ENCODE measurements at regions of chr17 and their contacts with region 1.

Region 1: GRCh38 chr17:42819944-42820535 is 4.0 kb downstream of the BECN1 start:
- DNase-seq: peak; percentile 79
- H3K4me3 Mint-ChIP-seq: no peak overlapping the region
- H3K27ac Mint-ChIP-seq: no peak overlapping the region
- H3K4me1 Mint-ChIP-seq: peaks cover 24% of the 10 kb centered on the region
- H3K27me3 Mint-ChIP-seq: no peaks in the 10 kb centered on the region

Region 2: DNA sequence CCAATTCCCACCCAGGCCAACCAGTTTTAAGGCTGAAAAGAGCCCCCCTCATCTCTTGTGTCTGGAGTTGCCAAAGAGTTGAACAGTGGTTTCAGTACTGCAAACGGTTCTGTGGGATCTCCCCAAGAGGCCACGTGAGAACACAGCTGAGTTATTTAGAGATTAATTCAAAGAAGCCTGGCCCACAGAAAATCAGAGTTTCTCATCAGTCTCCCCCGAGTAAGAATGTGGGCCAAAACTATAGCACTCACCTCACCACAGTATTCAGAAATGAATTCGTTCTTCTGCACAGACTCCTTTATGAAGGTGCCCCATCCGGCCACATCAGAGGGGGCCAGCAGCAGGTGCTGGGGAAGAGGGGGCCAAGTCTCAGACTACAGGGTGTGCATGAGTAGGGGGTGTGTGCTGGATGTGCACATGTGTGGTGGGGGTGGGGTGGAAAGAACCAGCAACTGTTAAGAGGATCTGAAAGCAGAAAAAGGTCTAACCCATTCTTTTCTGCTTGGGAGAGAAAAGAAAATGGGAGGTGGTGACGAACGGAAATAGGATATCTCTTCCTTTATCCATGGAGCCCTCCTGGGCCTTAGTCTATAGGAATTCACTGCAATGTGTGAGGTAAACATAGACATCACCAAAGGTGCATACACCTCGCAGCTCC is 115.1 kb before region 1 on chr17:
- CTCF ChIA-PET with region 1: no interaction called
- POLR2A ChIA-PET with region 1: no interaction called
- intact Hi-C with region 1: loop called (anchors 10 kb)
- DNase-seq: peak; percentile 73
- H3K4me3 Mint-ChIP-seq: no peak overlapping the region
- H3K27ac Mint-ChIP-seq: peak overlapping the region; percentile 18
- H3K4me1 Mint-ChIP-seq: peaks cover 46% of the 10 kb centered on the region
- H3K27me3 Mint-ChIP-seq: no peaks in the 10 kb centered on the region

Region 3: DNA sequence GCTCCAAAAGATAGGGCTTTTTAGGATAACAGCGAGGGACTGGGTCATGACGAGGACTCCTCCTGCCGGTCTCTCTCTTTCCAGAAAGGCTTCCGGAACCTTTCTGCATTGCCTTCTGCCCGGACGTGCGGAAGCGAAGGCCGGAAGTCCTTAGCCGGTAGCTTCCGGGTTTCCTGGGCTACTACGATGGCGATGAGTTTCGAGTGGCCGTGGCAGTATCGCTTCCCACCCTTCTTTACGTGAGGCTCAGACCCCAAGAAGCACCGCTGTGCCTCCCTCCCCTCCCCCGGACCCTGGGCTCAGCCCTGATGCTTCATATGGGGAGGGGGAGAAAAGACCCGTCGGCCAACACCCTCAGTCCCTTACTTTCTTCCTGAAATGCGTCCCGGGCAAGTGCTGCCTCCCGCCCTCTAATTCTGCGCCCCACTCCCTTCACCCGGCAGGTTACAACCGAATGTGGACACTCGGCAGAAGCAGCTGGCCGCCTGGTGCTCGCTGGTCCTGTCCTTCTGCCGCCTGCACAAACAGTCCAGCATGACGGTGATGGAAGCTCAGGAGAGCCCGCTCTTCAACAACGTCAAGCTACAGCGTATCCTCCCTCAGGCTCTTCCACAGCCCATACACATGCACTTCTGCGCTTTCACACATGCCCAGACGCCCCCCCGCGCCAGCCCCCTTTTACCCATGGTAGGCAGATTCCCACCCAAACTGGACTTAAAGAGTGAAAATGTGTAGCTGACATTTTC is 46.6 kb before region 1 on chr17 and contains the start of gene VPS25:
- CTCF ChIA-PET with region 1: interaction called, 7 read pairs
- POLR2A ChIA-PET with region 1: interaction called, 4 read pairs
- intact Hi-C with region 1: loop called (anchors 2 kb)
- DNase-seq: peak; percentile 84
- H3K4me3 Mint-ChIP-seq: peak within 1 kb of the TSS; percentile 100
- H3K27ac Mint-ChIP-seq: peak within 1 kb of the TSS; percentile 87
- H3K4me1 Mint-ChIP-seq: peaks cover 22% of the 10 kb centered on the region
- H3K27me3 Mint-ChIP-seq: no peaks in the 10 kb centered on the region
- total RNA-seq, gene VPS25: 57.5 to 58.6 TPM

Region 4: DNA sequence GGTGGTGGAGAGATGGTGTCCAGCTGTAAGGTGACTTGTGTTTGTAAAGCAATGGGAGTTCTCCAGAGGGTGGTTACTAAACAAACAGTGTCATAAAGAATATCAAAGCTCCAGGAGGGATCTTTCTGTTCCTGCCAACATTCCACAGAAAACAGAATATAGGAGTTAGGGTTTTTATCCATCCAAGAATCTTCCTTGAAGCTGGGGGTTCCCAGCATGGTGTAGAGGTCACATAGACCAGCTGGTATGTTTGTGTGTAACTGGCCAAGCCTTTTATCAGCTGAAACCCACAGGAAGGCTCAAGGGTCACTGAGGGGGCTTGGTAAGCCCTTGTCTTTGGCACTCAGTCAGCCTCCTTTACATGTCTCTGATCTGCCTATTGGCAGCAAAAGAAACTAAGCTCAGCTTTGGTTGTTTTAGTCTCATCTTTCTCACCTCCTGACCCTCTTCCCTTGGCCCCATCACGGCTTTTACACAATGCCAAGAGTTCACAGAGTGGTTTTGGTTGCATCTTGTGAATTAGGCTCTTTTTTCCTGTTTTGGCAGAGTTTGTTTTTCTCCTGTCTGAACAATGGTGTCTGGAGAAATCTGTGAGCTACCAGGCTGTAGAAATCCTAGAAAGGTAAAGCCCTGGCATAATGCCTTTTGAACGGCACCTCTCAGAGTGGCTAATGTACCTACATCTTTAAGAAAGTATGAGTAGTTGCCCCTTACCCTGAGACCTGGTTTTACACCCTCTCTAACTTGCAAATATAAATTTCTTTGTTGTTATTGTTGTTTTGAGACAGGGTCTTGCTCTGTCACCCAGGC is 16.8 kb before region 1 on chr17:
- CTCF ChIA-PET with region 1: interaction called, 14 read pairs
- POLR2A ChIA-PET with region 1: no interaction called
- intact Hi-C with region 1: no loop called
- DNase-seq: no peak
- H3K4me3 Mint-ChIP-seq: no peak overlapping the region
- H3K27ac Mint-ChIP-seq: peak overlapping the region; percentile 38
- H3K4me1 Mint-ChIP-seq: peaks cover 7% of the 10 kb centered on the region
- H3K27me3 Mint-ChIP-seq: no peaks in the 10 kb centered on the region

Region 5: DNA sequence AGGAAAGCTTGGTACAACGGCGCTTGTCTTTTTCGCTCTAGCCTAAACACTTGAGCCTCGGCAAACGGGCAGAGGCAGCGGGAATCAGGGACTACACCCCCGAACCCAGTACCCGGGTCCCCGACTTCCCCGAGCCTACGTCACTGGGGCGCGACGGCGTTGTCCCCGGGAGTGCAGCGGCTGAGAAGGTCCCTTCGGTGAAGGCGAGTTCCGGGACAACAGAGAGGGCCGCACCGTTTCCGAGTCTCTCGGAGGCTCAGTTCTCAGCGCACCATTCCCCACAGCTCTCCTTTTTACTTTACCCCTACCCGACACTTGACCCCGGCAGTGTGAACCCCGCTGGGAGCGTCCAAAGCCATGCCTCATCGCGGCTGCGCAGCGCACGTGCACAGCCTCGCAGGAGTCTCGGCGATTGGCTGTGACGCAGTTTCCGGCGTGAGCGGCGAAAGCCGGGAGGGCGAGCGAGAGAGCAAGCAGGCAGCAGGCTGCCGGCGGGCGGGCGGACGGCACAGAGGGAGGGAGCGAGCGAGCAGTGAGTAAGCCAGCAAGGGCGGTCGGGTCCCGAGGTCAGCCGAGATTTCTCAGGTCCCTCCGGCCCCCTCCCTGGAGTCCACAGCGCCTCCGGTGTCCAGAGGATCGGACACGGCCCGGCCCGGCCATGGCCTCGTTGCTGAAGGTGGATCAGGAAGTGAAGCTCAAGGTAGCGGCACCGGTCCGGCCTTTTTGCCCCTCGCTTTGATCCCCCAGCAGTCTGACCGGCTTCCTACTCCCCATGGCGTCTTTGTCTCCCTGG is 13.1 kb after region 1 on chr17 and contains the start of gene PSME3:
- CTCF ChIA-PET with region 1: interaction called, 47 read pairs
- POLR2A ChIA-PET with region 1: interaction called, 14 read pairs
- intact Hi-C with region 1: loop called (anchors 1 kb)
- DNase-seq: peak; percentile 93
- H3K4me3 Mint-ChIP-seq: peak within 1 kb of the TSS; percentile 97
- H3K27ac Mint-ChIP-seq: peak within 1 kb of the TSS; percentile 98
- H3K4me1 Mint-ChIP-seq: peaks cover 30% of the 10 kb centered on the region
- H3K27me3 Mint-ChIP-seq: no peaks in the 10 kb centered on the region
- total RNA-seq, gene PSME3: 111 to 116 TPM

Region 6: DNA sequence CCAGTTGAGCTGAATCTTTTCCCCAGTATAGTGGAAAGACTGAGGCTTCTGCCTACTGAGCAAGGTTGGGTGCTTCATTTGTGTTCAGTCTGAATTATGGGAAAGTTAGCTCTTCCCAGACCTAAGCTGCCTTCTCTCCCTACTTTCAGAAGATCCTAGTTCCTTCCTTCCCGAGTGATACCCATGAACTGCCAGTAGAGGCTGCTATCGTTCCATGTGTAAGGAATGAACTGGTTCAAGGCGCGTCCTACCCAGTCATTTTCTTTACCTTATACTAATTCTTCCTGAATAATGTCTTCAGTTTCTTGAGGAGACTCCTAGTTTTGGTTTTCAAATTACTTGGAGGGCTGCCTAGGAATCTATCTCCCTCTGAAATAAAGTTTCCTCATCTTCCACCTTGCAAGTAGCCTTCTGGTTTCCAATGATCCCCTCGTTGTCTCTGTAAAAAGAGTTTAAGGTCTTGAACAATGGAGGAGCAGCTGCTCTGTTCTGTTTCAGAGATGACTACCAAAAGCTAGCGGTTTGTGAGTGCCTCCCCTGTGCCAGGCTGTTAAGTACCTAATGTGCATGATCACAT is 23.4 kb after region 1 on chr17:
- CTCF ChIA-PET with region 1: interaction called, 11 read pairs
- POLR2A ChIA-PET with region 1: interaction called, 7 read pairs
- intact Hi-C with region 1: no loop called
- DNase-seq: peak; percentile 17
- H3K4me3 Mint-ChIP-seq: no peak overlapping the region
- H3K27ac Mint-ChIP-seq: no peak overlapping the region
- H3K4me1 Mint-ChIP-seq: peaks cover 16% of the 10 kb centered on the region
- H3K27me3 Mint-ChIP-seq: no peaks in the 10 kb centered on the region

Region 7: GRCh38 chr17:42928714-42929496 is 108.9 kb after region 1 on chr17:
- CTCF ChIA-PET with region 1: interaction called, 20 read pairs
- POLR2A ChIA-PET with region 1: interaction called, 3 read pairs
- intact Hi-C with region 1: no loop called
- DNase-seq: peak; percentile 57
- H3K4me3 Mint-ChIP-seq: no peak overlapping the region
- H3K27ac Mint-ChIP-seq: peak overlapping the region; percentile 47
- H3K4me1 Mint-ChIP-seq: peaks cover 8% of the 10 kb centered on the region
- H3K27me3 Mint-ChIP-seq: peaks cover 2% of the 10 kb centered on the region